ENCODE measurements at regions of chr10 and their contacts with region 1.

Region 1: GRCh38 chr10:102669206-102670064 is 25.2 kb downstream of the TRIM8 start:
- DNase-seq: no peak
- ATAC-seq: peak; percentile 50
- H3K4me3 Mint-ChIP-seq: no peak overlapping the region
- H3K27ac Mint-ChIP-seq: no peak overlapping the region
- H3K4me1 Mint-ChIP-seq: peaks cover 40% of the 10 kb centered on the region
- H3K27me3 Mint-ChIP-seq: no peaks in the 10 kb centered on the region
- CTCF ChIP-seq: peak; percentile 74

Region 2: DNA sequence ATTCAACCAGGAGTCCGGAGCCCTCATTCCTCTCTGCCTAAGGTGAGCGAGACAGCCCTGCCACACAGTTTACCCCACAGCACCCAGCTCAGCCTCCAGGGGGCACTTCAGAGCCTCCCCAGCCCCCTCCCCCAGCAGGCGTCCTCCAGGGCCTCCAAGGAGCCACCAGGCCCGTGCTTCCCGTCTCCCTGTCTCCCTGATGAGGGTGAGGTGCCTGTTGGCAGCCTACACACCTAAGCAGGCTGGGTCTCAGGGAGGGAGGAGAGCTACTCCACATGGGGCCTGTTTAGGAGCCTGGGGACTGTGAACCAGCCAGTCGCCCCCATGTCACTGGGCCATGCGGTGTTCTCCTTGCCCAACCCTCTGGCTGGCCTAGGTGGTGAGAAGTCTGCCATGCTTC is 54.1 kb before region 1 on chr10:
- CTCF ChIA-PET with region 1: interaction called, 12 read pairs
- POLR2A ChIA-PET with region 1: no interaction called
- intact Hi-C with region 1: no loop called
- DNase-seq: peak; percentile 56
- ATAC-seq: no peak
- H3K4me3 Mint-ChIP-seq: no peak overlapping the region
- H3K27ac Mint-ChIP-seq: no peak overlapping the region
- H3K4me1 Mint-ChIP-seq: peaks cover 30% of the 10 kb centered on the region
- H3K27me3 Mint-ChIP-seq: no peaks in the 10 kb centered on the region
- CTCF ChIP-seq: peak; percentile 39

Region 3: DNA sequence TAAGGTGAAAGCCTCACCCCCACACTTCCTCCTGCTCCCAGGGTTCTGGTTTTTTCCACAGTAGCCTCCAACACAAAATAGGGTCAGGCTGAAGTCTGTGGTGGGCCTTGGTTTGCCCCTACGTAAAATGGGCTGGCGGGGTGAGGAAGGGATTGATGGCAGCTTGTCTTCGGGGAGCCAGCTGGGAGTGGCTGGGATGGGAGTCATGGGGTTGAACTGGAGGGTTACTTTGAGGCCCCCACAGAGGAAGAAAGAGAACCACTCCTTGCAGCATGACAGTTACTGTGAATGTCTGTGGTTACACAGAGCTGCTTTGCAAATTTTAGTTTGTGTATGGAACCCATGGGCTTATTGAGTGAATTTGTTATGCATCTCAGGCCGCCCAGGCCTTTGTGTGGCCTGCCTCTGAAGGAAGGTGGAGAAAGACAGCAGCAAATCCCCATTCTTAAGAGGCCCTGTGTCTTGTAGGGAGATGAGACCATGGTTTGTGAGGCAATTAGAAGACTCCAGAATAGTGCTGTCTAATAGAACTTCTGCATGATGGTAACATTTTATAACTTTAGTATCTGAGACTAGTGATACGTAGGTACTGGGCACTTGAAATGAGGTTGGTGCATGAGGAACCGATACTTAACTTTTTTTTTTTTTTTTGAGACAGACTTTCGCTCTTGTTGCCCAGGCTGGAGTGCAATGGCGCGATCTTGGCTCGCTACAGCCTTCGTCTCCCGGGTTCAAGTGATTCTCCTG is 17.1 kb before region 1 on chr10:
- CTCF ChIA-PET with region 1: interaction called, 73 read pairs
- POLR2A ChIA-PET with region 1: interaction called, 67 read pairs
- intact Hi-C with region 1: no loop called
- DNase-seq: peak; percentile 57
- ATAC-seq: peak; percentile 55
- H3K4me3 Mint-ChIP-seq: peak overlapping the region; percentile 63
- H3K27ac Mint-ChIP-seq: peak overlapping the region; percentile 90
- H3K4me1 Mint-ChIP-seq: peaks cover 77% of the 10 kb centered on the region
- H3K27me3 Mint-ChIP-seq: no peaks in the 10 kb centered on the region
- CTCF ChIP-seq: no peak

Region 4: GRCh38 chr10:102962259-102962658 is 292.8 kb after region 1 on chr10:
- CTCF ChIA-PET with region 1: no interaction called
- POLR2A ChIA-PET with region 1: no interaction called
- intact Hi-C with region 1: no loop called
- DNase-seq: no peak
- ATAC-seq: no peak
- H3K4me3 Mint-ChIP-seq: no peak overlapping the region
- H3K27ac Mint-ChIP-seq: no peak overlapping the region
- H3K4me1 Mint-ChIP-seq: no peaks in the 10 kb centered on the region
- H3K27me3 Mint-ChIP-seq: no peaks in the 10 kb centered on the region
- CTCF ChIP-seq: no peak

Measured in activated CD8-positive, alpha-beta T cell treated with anti-CD3 and anti-CD28 coated beads for 36 hours (primary cell).